OCI-LY7 (cell line): ENCODE measurements at regions of chr6 and their contacts with region 1.

Region 1: GRCh38 chr6:2988426-2989331 is 11.0 kb upstream of the NQO2 start:
- DNase-seq: peak; percentile 89
- H3K4me3 ChIP-seq: peak overlapping the region; percentile 75
- H3K27ac ChIP-seq: peak overlapping the region; percentile 89
- H3K4me1 ChIP-seq: peaks cover 16% of the 10 kb centered on the region
- CTCF ChIP-seq: peak; percentile 80

Region 2: DNA sequence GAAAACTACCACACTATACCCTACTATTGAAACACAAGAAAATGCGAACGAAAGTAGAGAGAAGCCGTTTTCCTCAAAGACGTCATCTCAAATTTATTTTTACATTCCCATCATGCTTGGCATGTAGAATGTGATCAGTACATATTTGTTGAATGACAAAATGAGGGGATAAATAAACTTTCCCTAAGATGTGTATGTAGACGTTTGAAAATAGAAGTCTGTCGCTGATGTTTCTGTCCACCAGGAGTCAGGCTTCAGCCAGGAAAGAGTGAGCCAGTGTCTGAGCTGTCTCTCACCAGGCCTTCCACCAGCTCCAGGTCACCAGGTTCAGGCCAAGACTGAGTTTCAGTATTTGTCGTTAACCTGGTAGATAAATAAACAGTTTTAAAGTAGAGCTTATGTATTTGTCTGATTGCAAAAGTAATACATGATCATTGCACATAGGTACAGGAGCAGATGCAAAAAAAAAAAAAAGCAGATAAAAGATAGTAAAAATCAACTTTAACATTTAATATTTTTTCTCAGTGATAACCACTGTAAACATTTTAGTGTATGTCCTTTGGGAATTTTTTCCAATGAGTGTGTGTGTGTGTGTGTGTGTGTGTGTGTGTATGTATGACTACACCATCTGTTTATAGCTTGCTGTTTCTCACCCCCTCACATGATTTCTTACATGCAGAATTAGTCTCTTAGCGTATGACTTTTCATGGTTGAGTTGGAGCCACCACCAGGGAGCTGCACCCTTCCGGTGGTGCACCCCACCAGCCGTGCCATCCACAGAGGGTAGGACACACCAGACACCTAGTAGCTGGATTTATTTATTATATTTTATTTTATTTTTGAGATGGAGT is 197.3 kb before region 1 on chr6:
- CTCF ChIA-PET with region 1: interaction called, 5 read pairs
- POLR2A ChIA-PET with region 1: interaction called, 6 read pairs
- intact Hi-C with region 1: loop called (anchors 1 kb)
- DNase-seq: peak; percentile 75
- H3K4me3 ChIP-seq: no peak overlapping the region
- H3K27ac ChIP-seq: no peak overlapping the region
- H3K4me1 ChIP-seq: no peaks in the 10 kb centered on the region
- CTCF ChIP-seq: peak; percentile 90

Region 3: GRCh38 chr6:2942914-2943571 is 45.6 kb before region 1 on chr6:
- CTCF ChIA-PET with region 1: no interaction called
- POLR2A ChIA-PET with region 1: interaction called, 12 read pairs
- intact Hi-C with region 1: loop called (anchors 2 kb)
- DNase-seq: peak; percentile 62
- H3K4me3 ChIP-seq: peak overlapping the region; percentile 56
- H3K27ac ChIP-seq: peak overlapping the region; percentile 87
- H3K4me1 ChIP-seq: peaks cover 80% of the 10 kb centered on the region
- CTCF ChIP-seq: no peak

Region 4: GRCh38 chr6:3023663-3024483 is 35.2 kb after region 1 on chr6:
- CTCF ChIA-PET with region 1: interaction called, 4 read pairs
- POLR2A ChIA-PET with region 1: interaction called, 13 read pairs
- intact Hi-C with region 1: no loop called
- DNase-seq: peak; percentile 88
- H3K4me3 ChIP-seq: peak overlapping the region; percentile 61
- H3K27ac ChIP-seq: peak overlapping the region; percentile 95
- H3K4me1 ChIP-seq: peaks cover 62% of the 10 kb centered on the region
- CTCF ChIP-seq: no peak

Region 5: DNA sequence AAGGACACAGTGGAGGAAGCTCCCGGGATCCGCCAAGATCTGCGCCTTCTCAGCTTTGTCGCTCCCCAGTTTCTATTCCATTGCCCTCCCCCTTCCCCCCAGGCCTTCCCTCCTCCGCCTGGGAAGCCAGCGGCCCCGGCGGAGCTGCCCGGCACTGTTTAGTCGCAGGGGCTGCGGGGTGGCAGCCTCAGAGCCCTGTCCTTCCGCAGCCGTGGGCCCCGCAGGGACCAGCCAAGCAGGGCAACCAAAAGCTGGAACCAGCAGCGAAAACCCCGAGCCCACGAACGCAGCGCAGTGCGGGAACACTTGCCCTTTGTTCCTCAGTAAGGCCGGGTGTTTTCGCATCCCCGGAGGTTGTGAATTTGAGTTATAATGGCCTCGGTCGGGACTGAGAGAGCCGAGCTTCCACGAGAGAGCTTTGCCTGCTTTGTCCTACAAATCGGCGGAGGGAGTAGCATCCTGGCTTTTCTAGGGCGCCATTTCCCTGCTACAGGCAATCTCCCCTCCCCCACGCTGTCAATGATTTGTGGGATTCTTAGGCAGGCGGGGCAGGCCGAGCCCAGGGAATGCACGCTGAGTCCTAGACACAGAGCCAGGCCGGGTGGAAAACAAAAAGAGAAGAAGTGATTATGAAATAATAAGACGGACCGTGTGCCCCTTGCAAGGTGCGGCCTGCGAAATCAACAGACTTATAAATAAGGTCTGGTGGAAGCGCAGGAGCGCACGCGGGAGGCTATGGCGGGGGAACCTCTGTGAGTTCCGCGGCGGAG is 242.8 kb after region 1 on chr6:
- CTCF ChIA-PET with region 1: interaction called, 4 read pairs
- POLR2A ChIA-PET with region 1: no interaction called
- intact Hi-C with region 1: loop called (anchors 10 kb)
- DNase-seq: no peak
- H3K4me3 ChIP-seq: no peak overlapping the region
- H3K27ac ChIP-seq: no peak overlapping the region
- H3K4me1 ChIP-seq: peaks cover 39% of the 10 kb centered on the region
- CTCF ChIP-seq: no peak